Prostate gland (tissue), 2 donors: ENCODE measurements at regions of chr10 and their contacts with region 1.

Region 1: GRCh38 chr10:101095542-101096213 is 33.9 kb downstream of the KAZALD1 start:
- DNase-seq: peak; percentile 64
- H3K4me3 ChIP-seq: no peak overlapping the region
- H3K27ac ChIP-seq: no peak overlapping the region
- H3K4me1 ChIP-seq: no peaks in the 10 kb centered on the region
- H3K27me3 ChIP-seq: no peaks in the 10 kb centered on the region
- CTCF ChIP-seq: peak; percentile 57 to 82 (median 69)
- POLR2A ChIP-seq: no peak

Region 2: GRCh38 chr10:101141616-101142532 is 46.2 kb after region 1 on chr10:
- intact Hi-C with region 1: loop called (anchors 1 kb)
- DNase-seq: peak; percentile 70
- H3K4me3 ChIP-seq: no peak overlapping the region
- H3K27ac ChIP-seq: no peak overlapping the region
- H3K4me1 ChIP-seq: no peaks in the 10 kb centered on the region
- H3K27me3 ChIP-seq: peaks cover 54% of the 10 kb centered on the region
- CTCF ChIP-seq: peak; percentile 76 to 91 (median 85)
- POLR2A ChIP-seq: no peak